CD4-positive, alpha-beta T cell (primary cell): ENCODE measurements at regions of chr15 and their contacts with region 1.

Region 1: GRCh38 chr15:88620995-88621772 is at the start of gene AEN:
- DNase-seq: peak; percentile 91 to 98 (median 94)
- ATAC-seq: peak; percentile 82
- H3K4me3 ChIP-seq: peak within 1 kb of the TSS; percentile 77
- H3K4me3 Mint-ChIP-seq: peak within 1 kb of the TSS; percentile 95
- H3K27ac ChIP-seq: peak within 1 kb of the TSS; percentile 84 to 86
- H3K27ac Mint-ChIP-seq: peak within 1 kb of the TSS; percentile 95
- H3K4me1 ChIP-seq: peaks cover 55% of the 10 kb centered on the region
- H3K4me1 Mint-ChIP-seq: peaks cover 50% of the 10 kb centered on the region
- H3K27me3 ChIP-seq: no peaks in the 10 kb centered on the region
- H3K27me3 Mint-ChIP-seq: peaks cover 9% of the 10 kb centered on the region
- CTCF ChIP-seq: no peak
- total RNA-seq, gene AEN: 40.7 to 43.7 TPM

Region 2: DNA sequence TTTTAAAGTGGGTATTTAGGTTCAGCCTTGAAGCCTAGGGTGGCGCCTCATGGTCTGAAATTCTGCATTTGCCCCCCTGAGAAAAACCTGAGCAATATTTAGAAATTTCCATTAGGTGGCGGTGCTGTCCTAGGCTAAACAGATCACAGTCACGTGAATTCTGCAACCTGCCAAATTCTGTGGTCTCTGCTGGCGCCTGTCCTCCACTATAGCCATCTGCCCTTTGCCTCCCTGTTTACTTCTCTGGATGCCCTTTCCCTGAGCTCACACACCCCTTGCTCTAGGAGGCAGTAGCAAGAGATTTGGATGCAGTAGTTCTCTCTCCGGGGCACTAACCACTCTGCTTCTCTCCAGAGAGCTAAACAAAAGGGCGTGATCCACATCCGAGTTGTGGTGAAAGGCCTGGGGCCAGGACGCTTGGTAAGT is 144.5 kb before region 1 on chr15:
- CTCF ChIA-PET with region 1: no interaction called
- POLR2A ChIA-PET with region 1: no interaction called
- intact Hi-C with region 1: loop called (anchors 2 to 5 kb)
- DNase-seq: peak in 5 of 14 experiments; percentile 4 to 53 (median 43)
- ATAC-seq: peak; percentile 52
- H3K4me3 ChIP-seq: no peak overlapping the region
- H3K4me3 Mint-ChIP-seq: no peak overlapping the region
- H3K27ac ChIP-seq: no peak overlapping the region
- H3K27ac Mint-ChIP-seq: no peak overlapping the region
- H3K4me1 ChIP-seq: no peaks in the 10 kb centered on the region
- H3K4me1 Mint-ChIP-seq: peaks cover 6% of the 10 kb centered on the region
- H3K27me3 ChIP-seq: no peaks in the 10 kb centered on the region
- H3K27me3 Mint-ChIP-seq: no peaks in the 10 kb centered on the region
- CTCF ChIP-seq: peak; percentile 47

Region 3: DNA sequence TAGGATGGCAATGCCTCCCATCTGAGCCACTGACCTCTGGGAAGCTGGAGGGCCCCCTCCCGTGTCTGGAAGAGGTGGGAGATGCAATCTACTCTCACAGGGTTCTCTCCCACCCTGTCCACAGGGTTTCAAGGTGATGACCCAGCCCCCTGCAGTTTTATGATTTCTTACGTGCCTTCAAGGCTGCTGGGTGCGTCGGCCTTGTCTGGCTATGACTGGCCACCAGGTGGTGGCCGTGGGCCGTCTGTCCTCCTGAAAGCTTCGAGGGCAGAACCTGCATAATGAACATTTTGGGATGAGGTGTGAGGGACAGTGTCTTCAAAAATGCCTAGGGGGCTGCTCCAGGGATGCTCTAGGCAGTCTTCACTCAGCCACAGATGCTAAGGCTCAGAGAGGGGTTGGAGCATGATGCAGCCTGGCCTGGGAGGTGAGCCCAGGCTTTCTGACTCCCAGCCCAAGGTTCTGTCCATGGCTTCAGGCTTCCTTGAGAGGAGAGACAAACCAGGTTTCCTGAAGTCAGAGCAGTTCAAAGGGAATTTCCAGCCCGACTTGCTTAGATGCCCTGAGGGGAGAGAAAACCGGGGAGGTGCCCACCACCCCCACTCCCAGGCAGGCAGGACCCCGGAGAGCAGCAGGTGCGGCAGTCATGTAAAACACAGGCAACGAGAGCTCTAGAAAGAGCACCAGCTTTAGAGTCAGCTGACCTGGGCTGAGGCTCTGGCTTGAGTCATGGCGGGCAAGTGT is 36.3 kb after region 1 on chr15:
- CTCF ChIA-PET with region 1: interaction called, 18 read pairs
- POLR2A ChIA-PET with region 1: interaction called, 83 read pairs
- intact Hi-C with region 1: no loop called
- DNase-seq: peak in 2 of 14 experiments; percentile 33 to 36
- ATAC-seq: no peak
- H3K4me3 ChIP-seq: no peak overlapping the region
- H3K4me3 Mint-ChIP-seq: peak overlapping the region; percentile 45
- H3K27ac ChIP-seq: peak overlapping the region in 1 of 2 donors; percentile 51
- H3K27ac Mint-ChIP-seq: peak overlapping the region; percentile 93
- H3K4me1 ChIP-seq: peaks cover 84% of the 10 kb centered on the region
- H3K4me1 Mint-ChIP-seq: peaks cover 88% of the 10 kb centered on the region
- H3K27me3 ChIP-seq: no peaks in the 10 kb centered on the region
- H3K27me3 Mint-ChIP-seq: no peaks in the 10 kb centered on the region
- CTCF ChIP-seq: peak; percentile 15

Region 4: GRCh38 chr15:88834211-88834812 is 213.1 kb after region 1 on chr15:
- CTCF ChIA-PET with region 1: interaction called, 4 read pairs
- POLR2A ChIA-PET with region 1: no interaction called
- intact Hi-C with region 1: loop called (anchors 1 kb)
- DNase-seq: peak in 11 of 14 experiments; percentile 5 to 45 (median 23)
- ATAC-seq: no peak
- H3K4me3 ChIP-seq: no peak overlapping the region
- H3K4me3 Mint-ChIP-seq: no peak overlapping the region
- H3K27ac ChIP-seq: no peak overlapping the region
- H3K27ac Mint-ChIP-seq: no peak overlapping the region
- H3K4me1 ChIP-seq: peaks cover 5% of the 10 kb centered on the region
- H3K4me1 Mint-ChIP-seq: no peaks in the 10 kb centered on the region
- H3K27me3 ChIP-seq: no peaks in the 10 kb centered on the region
- H3K27me3 Mint-ChIP-seq: peaks cover 3% of the 10 kb centered on the region
- CTCF ChIP-seq: no peak

Region 5: DNA sequence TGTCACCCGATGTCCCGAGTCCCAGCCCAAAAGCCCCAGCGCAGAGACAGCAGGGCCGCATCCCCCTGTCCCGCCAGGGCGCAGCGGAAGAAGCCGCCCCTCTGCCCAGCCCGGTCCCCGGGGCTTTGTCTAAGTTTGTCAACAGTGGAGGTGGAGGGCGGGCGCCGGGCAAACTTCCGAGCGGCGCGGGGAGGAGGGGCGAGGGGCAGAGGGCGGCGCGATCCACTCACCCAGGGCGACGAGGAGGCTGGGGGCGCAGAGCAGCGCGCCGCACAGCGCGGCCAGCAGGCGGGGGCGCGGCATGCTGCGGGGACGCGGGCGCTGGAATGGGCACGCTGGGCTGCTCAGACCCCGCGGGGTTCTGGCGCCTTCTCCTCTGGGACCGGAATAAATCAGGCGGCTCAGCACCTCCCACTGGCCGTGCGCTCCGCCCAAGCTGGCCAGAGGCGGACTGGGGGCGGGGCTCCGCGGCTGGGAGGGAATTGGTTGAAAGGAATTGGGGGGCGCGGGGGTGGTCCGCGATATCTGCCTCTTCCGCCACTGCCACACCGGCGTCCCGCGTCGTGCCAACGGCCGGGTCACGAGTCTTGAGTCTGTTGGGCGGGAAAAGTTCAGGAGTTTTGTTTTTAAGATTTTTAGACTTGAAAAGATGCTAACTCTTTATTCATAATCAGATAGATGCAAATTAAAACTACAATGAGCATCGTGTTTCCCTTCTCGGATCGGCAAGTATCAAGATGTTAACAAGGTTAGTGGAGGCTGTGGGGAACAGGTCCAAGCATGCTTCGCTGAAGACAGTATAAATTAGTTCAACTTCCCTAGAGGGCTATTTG is 292.0 kb after region 1 on chr15 and contains the start of gene MFGE8:
- CTCF ChIA-PET with region 1: no interaction called
- POLR2A ChIA-PET with region 1: no interaction called
- intact Hi-C with region 1: loop called in 1 of 2 experiments (anchors 5 kb)
- DNase-seq: peak; percentile 53 to 81 (median 70)
- ATAC-seq: peak; percentile 95
- H3K4me3 ChIP-seq: peak within 1 kb of the TSS; percentile 80
- H3K4me3 Mint-ChIP-seq: peak within 1 kb of the TSS; percentile 94
- H3K27ac ChIP-seq: peak within 1 kb of the TSS in 1 of 2 donors; percentile 50
- H3K27ac Mint-ChIP-seq: peak within 1 kb of the TSS; percentile 87
- H3K4me1 ChIP-seq: peaks cover 23% of the 10 kb centered on the region
- H3K4me1 Mint-ChIP-seq: peaks cover 37% of the 10 kb centered on the region
- H3K27me3 ChIP-seq: no peaks in the 10 kb centered on the region
- H3K27me3 Mint-ChIP-seq: no peaks in the 10 kb centered on the region
- CTCF ChIP-seq: peak; percentile 41
- total RNA-seq, gene MFGE8: 87.9 to 93.0 TPM

Region 6: GRCh38 chr15:88982304-88982945 is 361.2 kb after region 1 on chr15:
- CTCF ChIA-PET with region 1: no interaction called
- POLR2A ChIA-PET with region 1: no interaction called
- intact Hi-C with region 1: no loop called
- DNase-seq: no peak
- ATAC-seq: no peak
- H3K4me3 ChIP-seq: no peak overlapping the region
- H3K4me3 Mint-ChIP-seq: no peak overlapping the region
- H3K27ac ChIP-seq: no peak overlapping the region
- H3K27ac Mint-ChIP-seq: no peak overlapping the region
- H3K4me1 ChIP-seq: peaks cover 2% of the 10 kb centered on the region
- H3K4me1 Mint-ChIP-seq: no peaks in the 10 kb centered on the region
- H3K27me3 ChIP-seq: no peaks in the 10 kb centered on the region
- H3K27me3 Mint-ChIP-seq: no peaks in the 10 kb centered on the region
- CTCF ChIP-seq: no peak

Region 7: DNA sequence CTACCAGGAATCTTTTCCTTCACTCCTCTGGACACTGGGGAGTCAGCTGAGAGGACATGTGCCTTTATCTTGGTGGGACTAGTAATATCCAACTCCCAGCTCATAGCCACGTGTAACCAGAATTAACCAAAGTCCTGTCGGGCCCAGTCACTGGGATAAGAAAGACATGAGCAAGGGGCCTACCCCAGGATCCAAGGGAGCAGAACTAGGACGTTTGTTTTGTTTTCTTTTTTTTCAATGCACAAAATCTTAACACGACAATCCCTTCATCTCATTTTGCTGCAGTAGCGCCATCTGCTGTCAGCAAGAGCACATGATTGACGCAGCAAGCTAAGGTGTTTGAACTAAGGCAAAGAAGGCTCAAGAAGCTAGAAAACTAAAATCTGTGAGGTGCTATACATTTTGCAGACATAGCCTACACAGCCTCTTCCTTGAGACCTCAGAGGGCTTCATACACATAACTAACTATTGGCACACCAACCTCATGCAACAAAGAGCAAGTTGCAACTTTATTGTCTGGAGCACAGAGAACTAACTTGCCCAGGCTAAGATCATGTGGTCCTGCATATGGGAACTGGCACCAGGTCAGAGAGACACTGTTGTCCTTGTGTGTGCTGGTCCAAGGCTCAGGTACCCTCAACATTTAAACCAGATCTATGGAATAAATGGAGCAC is 556.6 kb after region 1 on chr15:
- CTCF ChIA-PET with region 1: no interaction called
- POLR2A ChIA-PET with region 1: no interaction called
- intact Hi-C with region 1: loop called in 1 of 2 experiments (anchors 10 kb)
- DNase-seq: peak; percentile 32 to 82 (median 52)
- ATAC-seq: peak; percentile 75
- H3K4me3 ChIP-seq: no peak overlapping the region
- H3K4me3 Mint-ChIP-seq: no peak overlapping the region
- H3K27ac ChIP-seq: no peak overlapping the region
- H3K27ac Mint-ChIP-seq: no peak overlapping the region
- H3K4me1 ChIP-seq: peaks cover 4% of the 10 kb centered on the region
- H3K4me1 Mint-ChIP-seq: peaks cover 8% of the 10 kb centered on the region
- H3K27me3 ChIP-seq: no peaks in the 10 kb centered on the region
- H3K27me3 Mint-ChIP-seq: no peaks in the 10 kb centered on the region
- CTCF ChIP-seq: peak; percentile 77